Left cardiac atrium (tissue), 4 donors: ENCODE measurements at regions of chr1 and their contacts with region 1.

Region 1: DNA sequence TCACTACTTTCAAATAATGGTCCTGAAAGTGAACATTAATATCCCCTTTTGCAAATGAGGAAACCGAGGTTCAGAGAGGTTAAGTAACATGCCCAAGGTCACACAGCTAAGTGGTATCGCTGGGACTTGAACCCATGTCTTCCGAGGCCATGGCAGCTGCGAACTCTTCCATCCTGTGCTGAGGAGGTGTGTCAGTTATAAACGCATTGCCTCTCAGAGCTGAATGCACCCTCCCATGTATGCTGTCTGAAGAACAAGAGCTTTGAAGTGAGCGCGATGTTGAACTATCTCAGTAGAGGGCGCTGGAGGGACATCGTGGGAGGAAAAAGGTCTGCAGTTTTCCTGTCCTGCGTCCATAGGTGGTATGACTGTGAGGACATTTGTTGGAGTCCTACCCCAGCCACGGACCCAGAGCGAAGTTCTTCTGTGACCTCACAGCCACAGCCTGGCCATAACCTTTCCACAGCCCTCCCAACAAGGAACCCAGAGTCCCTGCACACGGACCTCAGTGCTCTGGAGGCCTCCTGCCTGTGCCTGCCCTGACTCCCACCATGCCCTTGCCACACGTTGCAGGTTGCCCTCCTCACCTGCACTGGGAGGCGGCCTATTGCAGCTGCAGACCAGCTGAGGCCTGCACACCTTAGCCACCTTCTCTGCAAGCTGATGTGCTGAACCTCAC is 7.5 kb downstream of the MYOC start:
- DNase-seq: peak; percentile 77
- ATAC-seq: peak; percentile 81 to 88

Region 2: DNA sequence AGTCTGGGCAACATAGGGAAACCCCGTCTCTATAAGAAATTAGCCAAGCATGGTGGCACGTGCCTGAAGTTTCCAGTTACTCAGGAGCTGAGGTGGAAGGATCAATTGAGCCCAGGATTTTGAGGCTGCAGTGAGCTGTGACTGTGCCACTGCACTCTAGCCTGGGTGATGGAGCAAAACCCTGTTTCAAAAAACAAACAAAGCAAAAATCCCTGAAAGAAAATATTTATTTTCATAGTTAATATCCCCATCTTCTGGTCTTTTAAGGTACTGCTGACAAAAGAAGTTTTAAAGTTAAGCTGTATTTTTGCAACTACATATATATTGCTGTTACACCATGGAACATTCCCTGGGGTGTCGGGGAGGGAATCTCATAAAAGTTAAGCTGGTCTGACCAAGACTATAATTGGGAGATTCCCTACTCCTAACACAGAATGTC is 70.9 kb after region 1 on chr1:
- intact Hi-C with region 1: loop called (anchors 2 to 10 kb)
- DNase-seq: no peak
- ATAC-seq: no peak

Region 3: GRCh38 chr1:171781176-171781875 is 136.4 kb after region 1 on chr1 and contains the start of gene METTL13:
- intact Hi-C with region 1: loop called in 1 of 2 experiments (anchors 5 kb)
- DNase-seq: peak; percentile 99
- ATAC-seq: peak; percentile 99 to 100
- total RNA-seq, gene METTL13: 13.0 to 16.2 TPM

Region 4: GRCh38 chr1:171984850-171985485 is 340.0 kb after region 1 on chr1:
- intact Hi-C with region 1: loop called (anchors 2 to 10 kb)
- DNase-seq: no peak
- ATAC-seq: peak; percentile 52 to 53